CD4-positive, alpha-beta T cell (primary cell): ENCODE measurements at regions of chr9 and their contacts with region 1.

Region 1: GRCh38 chr9:92669890-92670708 is at the start of gene IPPK:
- DNase-seq: peak; percentile 92 to 99 (median 95)
- ATAC-seq: peak; percentile 94
- H3K4me3 ChIP-seq: peak within 1 kb of the TSS; percentile 100
- H3K4me3 Mint-ChIP-seq: peak within 1 kb of the TSS; percentile 98
- H3K27ac ChIP-seq: peak within 1 kb of the TSS; percentile 88 to 96
- H3K27ac Mint-ChIP-seq: peak within 1 kb of the TSS; percentile 99
- H3K4me1 ChIP-seq: peaks cover 37% of the 10 kb centered on the region
- H3K4me1 Mint-ChIP-seq: peaks cover 45% of the 10 kb centered on the region
- H3K27me3 ChIP-seq: no peaks in the 10 kb centered on the region
- H3K27me3 Mint-ChIP-seq: no peaks in the 10 kb centered on the region
- CTCF ChIP-seq: no peak
- total RNA-seq, gene IPPK: 4.0 to 4.4 TPM

Region 2: DNA sequence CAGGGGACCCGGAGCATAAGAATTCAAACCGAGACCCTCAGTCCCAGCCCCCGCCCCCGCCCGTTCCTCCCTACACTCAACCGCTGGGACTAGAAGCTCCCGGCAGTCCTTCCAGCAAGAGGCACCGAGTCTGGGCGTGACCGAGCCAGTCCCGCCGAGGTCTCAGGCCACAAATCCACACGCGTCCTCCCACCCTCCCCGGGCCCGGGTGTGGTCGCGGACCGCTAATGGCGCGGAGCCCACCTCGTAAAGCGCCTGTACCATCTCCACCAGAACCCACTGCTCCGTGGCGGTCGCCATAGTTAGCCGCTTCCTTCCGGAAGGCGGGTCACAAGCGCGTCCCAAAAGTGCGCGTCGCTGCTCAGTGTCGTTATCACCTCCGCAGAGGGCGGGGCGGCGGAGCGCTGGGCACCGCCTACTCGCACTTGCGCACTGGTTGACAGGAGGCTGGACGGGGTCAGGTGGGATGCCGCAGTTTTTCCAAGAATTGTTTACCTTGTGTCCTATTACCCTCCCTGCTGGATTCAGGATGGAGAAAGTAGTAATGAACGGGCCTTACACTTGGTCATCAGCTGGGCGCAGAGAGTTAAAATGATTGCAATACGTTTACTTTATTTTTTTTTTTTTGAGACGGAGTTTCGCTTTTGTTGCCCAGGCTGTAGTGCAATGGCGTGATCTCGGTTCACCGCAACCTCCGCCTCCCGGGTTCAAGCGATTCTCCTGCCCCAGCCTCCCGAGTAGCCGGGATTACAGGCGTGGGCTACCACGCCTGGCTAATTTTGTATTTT is 554.8 kb before region 1 on chr9 and contains the start of gene SPTLC1:
- CTCF ChIA-PET with region 1: no interaction called
- POLR2A ChIA-PET with region 1: interaction called, 11 read pairs
- intact Hi-C with region 1: no loop called
- DNase-seq: peak; percentile 90 to 98 (median 92)
- ATAC-seq: peak; percentile 94
- H3K4me3 ChIP-seq: peak within 1 kb of the TSS; percentile 71
- H3K4me3 Mint-ChIP-seq: peak within 1 kb of the TSS; percentile 94
- H3K27ac ChIP-seq: peak within 1 kb of the TSS; percentile 84 to 89
- H3K27ac Mint-ChIP-seq: peak within 1 kb of the TSS; percentile 97
- H3K4me1 ChIP-seq: peaks cover 9% of the 10 kb centered on the region
- H3K4me1 Mint-ChIP-seq: peaks cover 47% of the 10 kb centered on the region
- H3K27me3 ChIP-seq: no peaks in the 10 kb centered on the region
- H3K27me3 Mint-ChIP-seq: no peaks in the 10 kb centered on the region
- CTCF ChIP-seq: no peak
- total RNA-seq, gene SPTLC1: 40.9 to 43.0 TPM

Region 3: GRCh38 chr9:92325269-92325990 is 344.7 kb before region 1 on chr9 and contains the starts of genes CENPP and NOL8:
- CTCF ChIA-PET with region 1: no interaction called
- POLR2A ChIA-PET with region 1: interaction called, 19 read pairs
- intact Hi-C with region 1: loop called (anchors 1 to 5 kb)
- DNase-seq: peak; percentile 68 to 93 (median 76)
- ATAC-seq: peak; percentile 94
- H3K4me3 ChIP-seq: peak within 1 kb of the TSS; percentile 69
- H3K4me3 Mint-ChIP-seq: peak within 1 kb of the TSS; percentile 96
- H3K27ac ChIP-seq: peak within 1 kb of the TSS; percentile 94 to 97
- H3K27ac Mint-ChIP-seq: peak within 1 kb of the TSS; percentile 94
- H3K4me1 ChIP-seq: peaks cover 13% of the 10 kb centered on the region
- H3K4me1 Mint-ChIP-seq: peaks cover 40% of the 10 kb centered on the region
- H3K27me3 ChIP-seq: no peaks in the 10 kb centered on the region
- H3K27me3 Mint-ChIP-seq: no peaks in the 10 kb centered on the region
- CTCF ChIP-seq: no peak
- total RNA-seq, gene CENPP: 4.8 TPM
- total RNA-seq, gene NOL8: 55.9 to 65.7 TPM

Region 4: GRCh38 chr9:92425474-92425873 is 244.6 kb before region 1 on chr9:
- CTCF ChIA-PET with region 1: no interaction called
- POLR2A ChIA-PET with region 1: no interaction called
- intact Hi-C with region 1: no loop called
- DNase-seq: no peak
- ATAC-seq: no peak
- H3K4me3 ChIP-seq: no peak overlapping the region
- H3K4me3 Mint-ChIP-seq: no peak overlapping the region
- H3K27ac ChIP-seq: no peak overlapping the region
- H3K27ac Mint-ChIP-seq: no peak overlapping the region
- H3K4me1 ChIP-seq: no peaks in the 10 kb centered on the region
- H3K4me1 Mint-ChIP-seq: no peaks in the 10 kb centered on the region
- H3K27me3 ChIP-seq: no peaks in the 10 kb centered on the region
- H3K27me3 Mint-ChIP-seq: no peaks in the 10 kb centered on the region
- CTCF ChIP-seq: no peak

Region 5: GRCh38 chr9:92576175-92576574 is 93.9 kb before region 1 on chr9:
- CTCF ChIA-PET with region 1: no interaction called
- POLR2A ChIA-PET with region 1: no interaction called
- intact Hi-C with region 1: no loop called
- DNase-seq: no peak
- ATAC-seq: no peak
- H3K4me3 ChIP-seq: no peak overlapping the region
- H3K4me3 Mint-ChIP-seq: no peak overlapping the region
- H3K27ac ChIP-seq: no peak overlapping the region
- H3K27ac Mint-ChIP-seq: no peak overlapping the region
- H3K4me1 ChIP-seq: no peaks in the 10 kb centered on the region
- H3K4me1 Mint-ChIP-seq: no peaks in the 10 kb centered on the region
- H3K27me3 ChIP-seq: no peaks in the 10 kb centered on the region
- H3K27me3 Mint-ChIP-seq: no peaks in the 10 kb centered on the region
- CTCF ChIP-seq: no peak

Region 6: DNA sequence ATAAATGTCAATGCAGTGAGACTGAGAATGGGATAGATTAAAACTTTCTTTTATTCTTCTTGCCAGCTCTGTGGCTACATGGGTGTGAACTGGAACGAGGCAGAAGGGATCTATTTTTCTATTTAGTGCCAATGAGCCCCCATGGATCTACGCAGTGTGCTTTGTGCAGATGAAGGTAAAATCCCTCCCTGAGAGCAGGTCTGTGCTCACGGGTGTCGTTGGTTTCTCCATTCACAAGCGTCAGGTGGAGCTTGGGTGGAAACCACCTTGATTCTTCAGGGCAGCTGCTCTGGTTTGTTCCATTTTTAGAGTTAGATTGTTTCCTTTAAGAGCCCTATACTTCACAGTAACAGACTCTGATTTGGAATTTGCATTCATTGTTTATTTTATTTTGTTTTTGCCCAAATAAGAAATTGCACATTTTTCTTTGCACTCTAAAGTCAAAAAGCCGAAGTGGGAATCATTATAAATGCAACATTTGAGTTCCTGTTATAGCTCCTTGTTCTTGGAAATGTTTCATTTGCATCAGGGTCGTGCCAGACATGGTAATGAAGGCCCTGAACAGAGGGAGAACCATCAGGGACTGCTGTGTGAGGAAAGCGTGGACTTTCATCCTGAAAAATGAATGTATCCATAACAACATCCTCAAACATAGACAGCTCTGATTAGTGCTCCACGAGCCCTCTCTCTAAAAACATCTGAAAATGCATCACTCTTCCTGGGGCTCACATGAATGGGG is 125.7 kb after region 1 on chr9:
- CTCF ChIA-PET with region 1: no interaction called
- POLR2A ChIA-PET with region 1: no interaction called
- intact Hi-C with region 1: no loop called
- DNase-seq: no peak
- ATAC-seq: no peak
- H3K4me3 ChIP-seq: no peak overlapping the region
- H3K4me3 Mint-ChIP-seq: no peak overlapping the region
- H3K27ac ChIP-seq: no peak overlapping the region
- H3K27ac Mint-ChIP-seq: no peak overlapping the region
- H3K4me1 ChIP-seq: peaks cover 4% of the 10 kb centered on the region
- H3K4me1 Mint-ChIP-seq: peaks cover 3% of the 10 kb centered on the region
- H3K27me3 ChIP-seq: peaks cover 0 to 7% of the 10 kb centered on the region in 2 experiments
- H3K27me3 Mint-ChIP-seq: peaks cover 48% of the 10 kb centered on the region
- CTCF ChIP-seq: no peak

Region 7: DNA sequence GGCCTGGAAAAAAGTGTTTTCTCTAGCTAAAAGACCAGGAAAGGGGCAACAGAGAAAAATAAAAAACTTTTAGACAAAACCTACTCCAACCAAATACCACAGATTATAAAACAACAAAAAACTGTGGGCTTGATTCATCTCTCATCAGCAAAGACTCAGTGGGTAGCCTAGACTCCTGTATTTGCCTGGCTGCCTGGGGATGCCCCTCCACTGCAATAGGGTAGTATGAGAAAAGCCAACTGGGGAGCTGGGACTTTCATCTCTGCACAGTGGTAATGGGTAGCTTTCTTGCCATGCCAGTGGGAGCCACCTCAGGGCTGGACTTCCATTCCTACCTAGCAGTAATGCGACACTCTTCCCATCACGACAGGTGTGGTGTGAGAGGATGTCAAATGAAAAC is 200.2 kb after region 1 on chr9:
- CTCF ChIA-PET with region 1: no interaction called
- POLR2A ChIA-PET with region 1: no interaction called
- intact Hi-C with region 1: loop called in 1 of 2 experiments (anchors 5 kb)
- DNase-seq: no peak
- ATAC-seq: no peak
- H3K4me3 ChIP-seq: no peak overlapping the region
- H3K4me3 Mint-ChIP-seq: no peak overlapping the region
- H3K27ac ChIP-seq: no peak overlapping the region
- H3K27ac Mint-ChIP-seq: no peak overlapping the region
- H3K4me1 ChIP-seq: peaks cover 5% of the 10 kb centered on the region
- H3K4me1 Mint-ChIP-seq: peaks cover 69% of the 10 kb centered on the region
- H3K27me3 ChIP-seq: no peaks in the 10 kb centered on the region
- H3K27me3 Mint-ChIP-seq: no peaks in the 10 kb centered on the region
- CTCF ChIP-seq: no peak

Region 8: GRCh38 chr9:93566408-93567270 is 896.5 kb after region 1 on chr9:
- CTCF ChIA-PET with region 1: interaction called, 3 read pairs
- POLR2A ChIA-PET with region 1: interaction called, 9 read pairs
- intact Hi-C with region 1: loop called in 1 of 2 experiments (anchors 5 kb)
- DNase-seq: peak; percentile 95 to 99 (median 99)
- ATAC-seq: peak; percentile 97
- H3K4me3 ChIP-seq: peak overlapping the region; percentile 70
- H3K4me3 Mint-ChIP-seq: peak overlapping the region; percentile 88
- H3K27ac ChIP-seq: peak overlapping the region; percentile 89 to 92
- H3K27ac Mint-ChIP-seq: peak overlapping the region; percentile 90
- H3K4me1 ChIP-seq: peaks cover 19% of the 10 kb centered on the region
- H3K4me1 Mint-ChIP-seq: peaks cover 10% of the 10 kb centered on the region
- H3K27me3 ChIP-seq: no peaks in the 10 kb centered on the region
- H3K27me3 Mint-ChIP-seq: no peaks in the 10 kb centered on the region
- CTCF ChIP-seq: peak; percentile 91

Region 9: GRCh38 chr9:94259077-94259892 is 1589.2 kb after region 1 on chr9 and contains the start of gene ZNF169:
- CTCF ChIA-PET with region 1: no interaction called
- POLR2A ChIA-PET with region 1: no interaction called
- intact Hi-C with region 1: loop called in 1 of 2 experiments (anchors 5 kb)
- DNase-seq: peak; percentile 74 to 91 (median 82)
- ATAC-seq: peak; percentile 100
- H3K4me3 ChIP-seq: peak within 1 kb of the TSS; percentile 98
- H3K4me3 Mint-ChIP-seq: peak within 1 kb of the TSS; percentile 98
- H3K27ac ChIP-seq: peak within 1 kb of the TSS; percentile 35 to 38
- H3K27ac Mint-ChIP-seq: peak within 1 kb of the TSS; percentile 88
- H3K4me1 ChIP-seq: peaks cover 21% of the 10 kb centered on the region
- H3K4me1 Mint-ChIP-seq: peaks cover 46% of the 10 kb centered on the region
- H3K27me3 ChIP-seq: peaks cover 0 to 6% of the 10 kb centered on the region in 2 experiments
- H3K27me3 Mint-ChIP-seq: peaks cover 5% of the 10 kb centered on the region
- CTCF ChIP-seq: no peak
- total RNA-seq, gene ZNF169: 3.5 to 5.1 TPM